A549 (cell line): ENCODE measurements at regions of chr11 and their contacts with region 1.

Region 1: GRCh38 chr11:3807909-3808860 is at the start of gene PGAP2:
- DNase-seq: peak; percentile 73 to 93
- ATAC-seq: peak; percentile 84 to 89
- H3K4me3 ChIP-seq: peak within 1 kb of the TSS; percentile 79
- H3K27ac ChIP-seq: peak within 1 kb of the TSS; percentile 80 to 90
- H3K4me1 ChIP-seq: 0 out of 3 replicates have a peak, but pooled peaks cover 8% of the 10 kb centered on the region
- CTCF ChIP-seq: peak; percentile 61
- EP300 ChIP-seq: no peak
- POLR2A ChIP-seq: 0 out of 2 replicates have a peak, but pooled peaks have one; percentile 16
- RAD21 ChIP-seq: peak; percentile 54 to 57; a peak in 3 of 5 replicates
- polyA plus RNA-seq, gene PGAP2: 35.2 and 49.2 TPM in 2 replicates

Region 2: DNA sequence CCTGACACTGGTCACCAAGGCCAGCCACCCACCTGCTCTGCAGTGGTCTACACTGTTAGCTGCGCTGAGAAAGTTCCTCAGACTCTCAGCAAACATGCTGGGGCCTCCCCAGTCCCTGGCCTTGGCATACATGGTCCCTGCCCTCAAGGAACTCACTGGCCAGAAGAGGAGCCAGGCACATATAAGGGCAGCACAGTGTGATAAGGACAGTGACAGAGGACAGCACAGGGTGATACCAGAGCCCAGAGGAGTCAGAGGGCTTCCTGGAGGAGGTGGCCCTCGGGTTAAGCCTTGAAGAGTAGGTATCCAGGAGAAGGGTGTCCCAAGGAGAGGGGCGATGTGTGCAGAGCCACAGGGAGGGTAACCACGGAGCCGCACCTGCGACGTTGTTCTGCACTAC is 162.6 kb before region 1 on chr11:
- CTCF ChIA-PET with region 1: no interaction called
- POLR2A ChIA-PET with region 1: no interaction called
- DNase-seq: no peak
- ATAC-seq: no peak
- H3K4me3 ChIP-seq: no peak overlapping the region
- H3K27ac ChIP-seq: no peak overlapping the region
- H3K4me1 ChIP-seq: peaks cover 27% of the 10 kb centered on the region
- CTCF ChIP-seq: no peak
- EP300 ChIP-seq: no peak
- POLR2A ChIP-seq: no peak
- RAD21 ChIP-seq: no peak

Region 3: GRCh38 chr11:3773180-3773579 is 35.0 kb before region 1 on chr11:
- CTCF ChIA-PET with region 1: interaction called, 21 read pairs
- POLR2A ChIA-PET with region 1: no interaction called
- DNase-seq: no peak
- ATAC-seq: peak; percentile 63 to 66; a peak in 5 of 6 replicates
- H3K4me3 ChIP-seq: no peak overlapping the region
- H3K27ac ChIP-seq: no peak overlapping the region
- H3K4me1 ChIP-seq: no peaks in the 10 kb centered on the region
- CTCF ChIP-seq: no peak
- EP300 ChIP-seq: no peak
- POLR2A ChIP-seq: no peak
- RAD21 ChIP-seq: no peak

Region 4: GRCh38 chr11:3797329-3798095 is 10.7 kb before region 1 on chr11 and contains the start of gene NUP98:
- CTCF ChIA-PET with region 1: interaction called, 56 read pairs
- POLR2A ChIA-PET with region 1: interaction called, 23 read pairs
- DNase-seq: peak; percentile 98 to 100
- ATAC-seq: peak; percentile 93 to 94
- H3K4me3 ChIP-seq: peak within 1 kb of the TSS; percentile 100
- H3K27ac ChIP-seq: peak within 1 kb of the TSS; percentile 95
- H3K4me1 ChIP-seq: peaks cover 29% of the 10 kb centered on the region
- CTCF ChIP-seq: no peak
- EP300 ChIP-seq: no peak
- POLR2A ChIP-seq: peak; percentile 95
- RAD21 ChIP-seq: no peak
- polyA plus RNA-seq, gene NUP98: 121 and 152 TPM in 2 replicates

Region 5: DNA sequence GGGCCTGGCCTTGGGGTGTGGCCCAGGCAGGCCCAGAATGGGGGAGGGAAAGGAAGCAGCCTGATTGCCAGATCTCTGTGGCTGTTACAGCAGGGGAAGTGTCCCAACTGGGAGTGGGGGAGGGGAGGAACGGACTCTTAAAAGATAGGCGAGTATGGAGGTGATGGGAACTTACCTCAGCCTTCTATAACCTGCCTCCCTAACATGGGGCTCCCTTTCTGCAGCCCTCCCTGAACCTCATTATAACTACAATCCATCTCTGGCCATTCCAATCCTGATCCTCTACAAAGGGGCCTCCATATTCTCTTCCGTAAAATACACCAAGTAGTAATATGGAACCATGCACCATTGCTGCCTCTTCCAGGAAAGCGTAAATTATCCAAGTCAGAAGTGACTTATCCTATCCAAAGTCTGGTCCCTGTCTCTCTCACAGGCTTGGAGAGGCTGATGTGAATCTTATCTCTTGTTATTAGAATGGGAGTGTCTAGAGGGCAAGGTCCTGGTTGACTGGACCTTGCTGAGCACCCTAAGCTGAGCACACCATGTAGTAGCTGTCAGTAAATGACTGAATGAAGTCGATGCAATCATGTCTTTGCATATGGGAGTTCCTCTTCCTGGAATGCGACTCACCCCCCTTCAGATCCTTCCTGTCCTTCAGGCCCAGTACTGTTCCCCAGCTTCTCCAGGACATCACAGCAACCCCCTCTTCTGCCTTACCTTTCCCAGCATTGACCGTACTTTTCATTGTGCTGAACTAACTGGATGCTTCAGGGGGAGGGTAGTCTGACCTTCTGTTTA is 26.7 kb after region 1 on chr11:
- CTCF ChIA-PET with region 1: interaction called, 18 read pairs
- POLR2A ChIA-PET with region 1: no interaction called
- DNase-seq: no peak
- ATAC-seq: no peak
- H3K4me3 ChIP-seq: no peak overlapping the region
- H3K27ac ChIP-seq: no peak overlapping the region
- H3K4me1 ChIP-seq: peaks cover 38% of the 10 kb centered on the region
- CTCF ChIP-seq: no peak
- EP300 ChIP-seq: no peak
- POLR2A ChIP-seq: no peak
- RAD21 ChIP-seq: no peak

Region 6: GRCh38 chr11:3849297-3849874 is 41.2 kb after region 1 on chr11:
- CTCF ChIA-PET with region 1: interaction called, 15 read pairs
- POLR2A ChIA-PET with region 1: no interaction called
- DNase-seq: peak; percentile 49 to 51
- ATAC-seq: peak; percentile 74 to 87; a peak in 5 of 6 replicates
- H3K4me3 ChIP-seq: no peak overlapping the region
- H3K27ac ChIP-seq: no peak overlapping the region
- H3K4me1 ChIP-seq: peaks cover 4% of the 10 kb centered on the region
- CTCF ChIP-seq: peak; percentile 87
- EP300 ChIP-seq: no peak; a peak in 1 of 5 replicates
- POLR2A ChIP-seq: no peak
- RAD21 ChIP-seq: peak; percentile 69 to 72

Region 7: DNA sequence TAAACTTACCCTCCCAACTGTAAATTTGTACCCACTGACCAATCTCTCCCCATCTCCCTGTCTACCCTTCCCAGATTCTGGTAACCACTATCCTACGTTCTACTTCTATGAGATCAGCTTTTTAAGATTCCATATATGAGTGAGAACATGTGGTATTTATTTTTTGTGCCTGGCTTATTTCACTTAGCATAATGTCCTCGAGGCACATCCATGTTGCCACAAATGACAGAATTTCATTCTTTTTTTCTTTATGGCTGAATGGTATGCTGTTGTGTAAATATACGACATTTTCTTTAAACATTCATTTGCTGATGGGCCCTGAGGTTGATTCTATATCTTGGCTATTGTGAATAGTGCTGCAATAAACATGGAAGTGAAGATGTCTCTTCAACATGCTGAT is 211.7 kb after region 1 on chr11:
- CTCF ChIA-PET with region 1: no interaction called
- POLR2A ChIA-PET with region 1: no interaction called
- DNase-seq: no peak
- ATAC-seq: no peak
- H3K4me3 ChIP-seq: no peak overlapping the region
- H3K27ac ChIP-seq: no peak overlapping the region
- H3K4me1 ChIP-seq: 0 out of 3 replicates have a peak, but pooled peaks cover 3% of the 10 kb centered on the region
- CTCF ChIP-seq: no peak
- EP300 ChIP-seq: no peak
- POLR2A ChIP-seq: no peak
- RAD21 ChIP-seq: no peak